Activated T-helper 2 cell treated with anti-CD3 and anti-CD28 coated beads, Interferon-gamma antibody, Interleukin-2, Interleukin-4, amounts not matched to agents 10 μg/mL and 5 μg/mL and 100 μg/mL, durations not matched to agents 14 hours and 24 hours and 36 hours (primary cell): ENCODE measurements at regions of chr1 and their contacts with region 1.

Region 1: DNA sequence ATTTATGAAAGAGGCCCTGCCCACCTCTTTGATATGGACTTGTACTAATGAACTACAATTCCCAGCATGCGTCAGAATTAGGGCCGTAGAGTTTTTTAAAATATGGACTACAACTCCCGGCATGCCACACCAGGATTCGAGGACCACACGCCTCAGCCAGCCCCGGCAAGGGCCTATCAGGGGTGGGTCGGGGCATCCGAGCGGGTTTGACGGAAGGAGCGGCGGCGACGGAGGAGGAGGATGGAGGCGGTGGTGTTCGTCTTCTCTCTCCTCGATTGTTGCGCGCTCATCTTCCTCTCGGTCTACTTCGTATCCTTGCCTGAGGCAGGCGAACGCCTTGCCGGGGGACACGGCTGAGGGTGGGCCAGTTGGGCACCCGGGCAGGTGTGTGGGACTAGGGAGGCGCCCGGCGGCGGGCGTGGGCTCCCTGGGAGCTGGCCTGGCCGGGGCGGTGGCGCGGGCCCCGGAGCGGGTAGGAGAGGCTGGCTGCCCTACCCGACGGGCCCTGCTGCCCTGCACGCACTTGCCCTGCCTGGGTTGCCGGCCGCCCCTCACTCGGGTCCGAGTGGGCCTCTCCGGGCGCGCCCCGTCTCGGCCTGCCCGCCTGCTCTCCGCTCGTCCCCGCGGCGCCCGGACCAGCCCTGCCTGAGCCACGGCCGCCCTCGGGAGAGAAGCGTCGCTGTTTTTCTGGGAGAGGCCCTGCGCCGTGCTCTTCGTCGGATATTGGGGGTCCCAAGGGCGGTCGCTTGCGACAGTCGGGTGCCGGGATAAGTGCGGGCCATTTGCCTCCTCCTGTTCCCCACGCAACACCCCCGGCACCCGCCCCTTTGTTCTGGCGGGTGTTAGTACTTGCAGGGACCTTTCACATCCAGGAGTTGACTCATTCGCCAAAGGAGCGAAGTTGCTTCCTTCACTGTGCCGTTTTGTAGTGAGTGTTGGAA is at the start of gene CNIH4:
- DNase-seq: peak; percentile 88
- H3K4me3 Mint-ChIP-seq: peak within 1 kb of the TSS; percentile 94
- H3K27ac Mint-ChIP-seq: peak within 1 kb of the TSS; percentile 89
- H3K4me1 Mint-ChIP-seq: peaks cover 32% of the 10 kb centered on the region
- H3K27me3 Mint-ChIP-seq: no peaks in the 10 kb centered on the region
- total RNA-seq, gene CNIH4: 60.2 and 60.7 TPM in 2 replicates

Region 2: GRCh38 chr1:224368409-224368808 is 11.5 kb after region 1 on chr1:
- intact Hi-C with region 1: loop called (anchors 1 kb)
- DNase-seq: no peak
- H3K4me3 Mint-ChIP-seq: peak overlapping the region; percentile 30
- H3K27ac Mint-ChIP-seq: peak overlapping the region; percentile 77
- H3K4me1 Mint-ChIP-seq: peaks cover 53% of the 10 kb centered on the region
- H3K27me3 Mint-ChIP-seq: no peaks in the 10 kb centered on the region